ENCODE measurements at regions of chr6 and their contacts with region 1.

Region 1: DNA sequence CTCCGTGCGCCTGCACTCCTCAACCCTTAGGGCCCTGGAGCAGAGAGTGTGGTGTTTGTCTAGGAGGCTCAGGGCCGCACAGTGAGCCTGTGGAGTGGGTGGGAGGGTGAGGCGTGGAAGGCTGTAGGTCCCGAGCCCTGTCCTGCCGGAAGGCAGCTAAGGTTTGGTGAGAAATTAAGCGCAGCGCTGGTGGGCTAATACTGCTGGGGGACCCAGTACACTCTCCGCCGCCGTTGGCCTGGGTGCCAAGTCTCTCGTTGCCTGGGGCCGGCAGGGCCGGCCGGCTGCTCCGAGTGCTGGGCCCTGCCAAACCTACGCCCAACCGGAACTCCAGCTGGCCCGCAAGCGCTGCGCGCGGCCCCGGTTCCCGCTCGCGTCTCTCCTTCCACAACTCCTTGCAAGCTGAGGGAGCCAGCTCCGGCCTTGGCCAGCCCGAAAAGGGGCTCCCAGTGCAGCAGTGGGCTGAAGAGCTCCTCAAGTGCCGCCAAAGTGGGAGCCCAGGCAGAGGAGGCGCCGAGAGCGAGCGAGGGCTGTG is 40.4 kb upstream of the MCUR1 start:
- DNase-seq: no peak

Region 2: DNA sequence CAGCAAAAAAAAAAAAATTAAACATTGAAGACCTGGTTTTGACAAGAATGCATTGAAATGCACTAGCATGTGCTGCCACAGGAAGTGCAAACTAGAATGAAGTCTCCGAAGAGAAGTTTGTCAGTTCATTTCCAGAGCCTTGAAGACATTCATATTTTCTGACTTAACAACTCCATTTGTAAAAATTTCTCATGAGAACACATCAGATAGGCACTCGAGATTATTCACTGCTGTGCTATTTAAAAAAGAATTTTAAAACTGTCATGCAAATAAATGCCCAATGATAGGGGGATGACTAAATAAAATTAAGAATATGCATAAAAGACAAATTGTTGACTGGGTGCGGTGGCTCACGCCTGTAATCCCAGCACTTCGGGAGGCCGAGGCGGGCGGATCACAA is 996.5 kb after region 1 on chr6:
- intact Hi-C with region 1: loop called in 1 of 2 experiments (anchors 5 kb)
- DNase-seq: no peak

Measured in posterior vena cava (tissue), 2 donors.